ENCODE measurements at regions of chr2 and their contacts with region 1.

Region 1: GRCh38 chr2:199979832-199980628 is 24.6 kb downstream of the MAIP1 start:
- DNase-seq: peak; percentile 91
- ATAC-seq: no peak
- H3K4me3 Mint-ChIP-seq: no peak overlapping the region
- H3K27ac Mint-ChIP-seq: no peak overlapping the region
- H3K4me1 Mint-ChIP-seq: peaks cover 21% of the 10 kb centered on the region
- H3K27me3 Mint-ChIP-seq: no peaks in the 10 kb centered on the region

Region 2: GRCh38 chr2:199914372-199914958 is 65.6 kb before region 1 on chr2:
- CTCF ChIA-PET with region 1: no interaction called
- POLR2A ChIA-PET with region 1: no interaction called
- intact Hi-C with region 1: no loop called
- DNase-seq: no peak
- ATAC-seq: no peak
- H3K4me3 Mint-ChIP-seq: peak overlapping the region; percentile 15
- H3K27ac Mint-ChIP-seq: peak overlapping the region; percentile 0
- H3K4me1 Mint-ChIP-seq: peaks cover 24% of the 10 kb centered on the region
- H3K27me3 Mint-ChIP-seq: no peaks in the 10 kb centered on the region

Region 3: DNA sequence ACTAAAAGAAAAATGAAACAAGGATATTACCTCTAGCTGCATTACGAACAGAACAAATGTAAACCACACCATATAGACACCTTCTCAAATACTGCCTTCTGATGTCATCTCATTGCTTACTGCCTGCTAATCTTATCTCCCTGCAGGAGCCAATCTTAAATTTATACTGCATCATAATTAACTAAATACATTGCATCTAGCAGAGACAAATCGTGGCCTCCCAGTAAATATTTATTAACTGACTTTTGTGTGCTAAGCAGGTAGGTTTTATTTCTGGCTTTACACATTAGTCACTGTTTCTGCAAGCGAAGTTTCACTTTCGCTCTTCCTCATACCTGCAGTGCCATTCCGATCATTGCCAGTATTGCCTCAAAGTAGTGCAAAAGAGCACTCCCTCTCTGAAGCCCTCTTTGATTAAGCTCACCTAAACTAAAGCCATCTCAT is 394.0 kb after region 1 on chr2:
- CTCF ChIA-PET with region 1: interaction called, 4 read pairs
- POLR2A ChIA-PET with region 1: no interaction called
- intact Hi-C with region 1: loop called (anchors 1 kb)
- DNase-seq: peak; percentile 57
- ATAC-seq: peak; percentile 92
- H3K4me3 Mint-ChIP-seq: peak overlapping the region; percentile 67
- H3K27ac Mint-ChIP-seq: peak overlapping the region; percentile 79
- H3K4me1 Mint-ChIP-seq: peaks cover 46% of the 10 kb centered on the region
- H3K27me3 Mint-ChIP-seq: no peaks in the 10 kb centered on the region

Region 4: DNA sequence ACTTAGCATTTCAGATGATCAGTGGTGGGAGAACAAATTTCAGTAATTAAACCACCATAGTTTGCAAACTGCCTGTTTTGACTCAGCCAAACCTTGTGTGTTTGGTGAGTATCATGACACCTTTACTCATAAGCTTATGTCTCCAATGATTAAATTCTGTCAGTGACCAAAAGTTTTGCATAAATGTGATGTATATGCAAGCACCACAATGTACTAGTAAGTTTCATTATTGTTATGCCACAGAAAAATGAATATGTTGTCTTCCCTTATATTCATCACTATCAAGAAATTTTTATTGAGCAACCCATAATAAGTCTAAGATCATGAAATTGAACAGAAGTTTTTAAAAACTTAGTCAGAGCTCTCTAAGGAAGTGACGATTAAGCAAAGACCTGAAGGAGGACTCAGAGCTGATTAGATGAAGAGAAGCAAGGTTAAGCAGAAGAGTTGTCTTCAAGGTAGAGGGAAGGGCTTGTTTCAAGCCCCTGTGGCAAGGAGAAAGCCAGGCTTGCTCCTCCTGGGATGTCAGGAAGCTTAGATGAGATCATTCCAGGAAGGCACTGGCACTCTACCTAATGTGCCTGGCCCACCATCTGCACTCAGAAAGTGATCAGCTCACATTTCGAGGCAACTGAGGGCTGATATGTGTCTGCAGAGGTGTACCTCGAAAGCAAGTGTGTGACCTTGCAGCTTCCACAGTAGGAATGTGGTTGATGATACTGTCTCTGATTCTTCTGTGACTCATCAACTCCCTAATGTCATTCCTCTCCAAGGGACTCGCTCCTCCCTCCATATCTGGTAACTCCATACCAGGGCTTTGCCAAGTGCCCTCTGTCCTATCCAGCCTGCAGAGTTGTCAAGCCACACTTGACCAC is 475.1 kb after region 1 on chr2:
- CTCF ChIA-PET with region 1: interaction called, 3 read pairs
- POLR2A ChIA-PET with region 1: no interaction called
- intact Hi-C with region 1: loop called (anchors 1 kb)
- DNase-seq: peak; percentile 41
- ATAC-seq: peak; percentile 78
- H3K4me3 Mint-ChIP-seq: peak overlapping the region; percentile 10
- H3K27ac Mint-ChIP-seq: peak overlapping the region; percentile 96
- H3K4me1 Mint-ChIP-seq: peaks cover 33% of the 10 kb centered on the region
- H3K27me3 Mint-ChIP-seq: no peaks in the 10 kb centered on the region

Region 5: DNA sequence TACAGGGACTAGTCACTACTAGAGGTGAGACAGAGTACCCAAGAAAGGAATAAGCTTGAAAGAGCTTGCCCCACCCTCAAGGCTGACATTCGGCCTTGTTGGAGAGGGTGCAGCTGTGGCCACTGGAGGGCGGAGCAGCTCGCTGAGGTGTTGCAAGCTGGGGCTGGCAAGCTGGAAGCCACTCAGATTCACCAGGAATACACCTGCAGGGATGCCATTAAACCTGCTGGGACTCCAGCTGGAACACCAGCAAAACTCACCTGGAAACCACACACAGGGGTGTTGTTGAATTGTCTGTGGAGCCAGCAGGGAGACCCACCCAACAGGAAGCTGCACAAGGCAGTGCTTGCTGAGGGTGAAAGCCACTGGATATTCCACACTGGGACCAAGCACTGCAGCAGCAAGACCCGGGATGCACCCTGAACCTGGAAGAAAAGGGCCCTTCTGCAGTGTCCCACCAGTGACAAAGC is 503.7 kb after region 1 on chr2:
- CTCF ChIA-PET with region 1: interaction called, 44 read pairs
- POLR2A ChIA-PET with region 1: no interaction called
- intact Hi-C with region 1: loop called (anchors 1 kb)
- DNase-seq: peak; percentile 72
- ATAC-seq: peak; percentile 69
- H3K4me3 Mint-ChIP-seq: no peak overlapping the region
- H3K27ac Mint-ChIP-seq: no peak overlapping the region
- H3K4me1 Mint-ChIP-seq: peaks cover 5% of the 10 kb centered on the region
- H3K27me3 Mint-ChIP-seq: no peaks in the 10 kb centered on the region